Endothelial cell of umbilical vein (primary cell): ENCODE measurements at regions of chr9 and their contacts with region 1.

Region 1: DNA sequence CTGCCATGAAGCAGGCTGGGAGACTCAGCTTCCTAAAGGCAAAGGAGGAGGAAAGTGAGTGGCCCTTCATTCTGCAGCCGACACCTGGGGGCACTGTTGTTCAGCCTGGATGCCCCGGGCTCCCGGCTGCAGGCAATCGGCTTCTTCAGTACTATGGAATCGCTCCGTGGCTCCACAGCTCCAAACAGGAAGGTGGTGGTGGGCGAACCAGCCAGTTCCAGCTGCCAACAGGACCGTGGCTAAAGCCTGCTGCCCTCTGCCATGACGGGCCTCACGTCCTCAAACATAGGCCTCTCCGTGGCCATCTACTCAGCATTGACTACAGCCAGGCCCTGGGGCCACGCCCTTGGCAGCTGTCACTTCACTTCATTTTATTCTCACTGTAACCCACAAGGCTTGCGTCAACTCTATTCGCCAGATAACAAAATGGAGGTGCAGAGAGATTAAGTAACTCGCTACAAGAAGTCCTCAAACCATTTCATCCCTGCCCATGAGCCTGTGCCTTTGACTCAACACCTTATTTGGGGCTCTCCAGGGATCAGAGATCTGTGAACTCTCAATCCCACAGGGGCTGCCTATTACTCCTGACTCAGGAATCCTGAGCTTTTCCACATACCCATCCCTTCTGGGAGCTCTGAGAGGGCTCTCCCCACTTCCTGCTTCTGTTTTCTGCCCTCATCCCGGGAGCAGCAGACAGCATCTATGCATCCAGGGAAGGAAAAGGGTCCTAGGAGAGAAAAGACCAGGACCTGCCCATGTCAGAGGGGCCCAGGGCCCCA is 38.0 kb downstream of the PAX5 start:
- DNase-seq: peak; percentile 68
- H3K4me3 ChIP-seq: no peak overlapping the region
- H3K27ac ChIP-seq: no peak overlapping the region
- H3K4me1 ChIP-seq: no peaks in the 10 kb centered on the region
- H3K27me3 ChIP-seq: peaks cover 10 to 18% of the 10 kb centered on the region in 2 experiments
- CTCF ChIP-seq: peak; percentile 68 to 90
- POLR2A ChIP-seq: no peak

Region 2: GRCh38 chr9:36862206-36863145 is 133.6 kb before region 1 on chr9:
- CTCF ChIA-PET with region 1: no interaction called
- POLR2A ChIA-PET with region 1: no interaction called
- dilution Hi-C with region 1: no loop called
- intact Hi-C with region 1: loop called (anchors 1 kb)
- DNase-seq: peak; percentile 40
- H3K4me3 ChIP-seq: no peak overlapping the region
- H3K27ac ChIP-seq: no peak overlapping the region
- H3K4me1 ChIP-seq: no peaks in the 10 kb centered on the region
- H3K27me3 ChIP-seq: peaks cover 26 to 35% of the 10 kb centered on the region in 2 experiments
- CTCF ChIP-seq: peak; percentile 65 to 84
- POLR2A ChIP-seq: no peak

Region 3: GRCh38 chr9:37010180-37010579 is 14.1 kb after region 1 on chr9:
- CTCF ChIA-PET with region 1: interaction called, 14 read pairs
- POLR2A ChIA-PET with region 1: no interaction called
- dilution Hi-C with region 1: no loop called
- intact Hi-C with region 1: no loop called
- DNase-seq: no peak
- H3K4me3 ChIP-seq: no peak overlapping the region
- H3K27ac ChIP-seq: no peak overlapping the region
- H3K4me1 ChIP-seq: no peaks in the 10 kb centered on the region
- H3K27me3 ChIP-seq: peaks cover 25 to 30% of the 10 kb centered on the region in 2 experiments
- CTCF ChIP-seq: no peak
- POLR2A ChIP-seq: no peak

Region 4: GRCh38 chr9:37102486-37102885 is 106.4 kb after region 1 on chr9:
- CTCF ChIA-PET with region 1: no interaction called
- POLR2A ChIA-PET with region 1: no interaction called
- dilution Hi-C with region 1: no loop called
- intact Hi-C with region 1: no loop called
- DNase-seq: no peak
- H3K4me3 ChIP-seq: no peak overlapping the region
- H3K27ac ChIP-seq: no peak overlapping the region
- H3K4me1 ChIP-seq: no peaks in the 10 kb centered on the region
- H3K27me3 ChIP-seq: peaks cover 2 to 8% of the 10 kb centered on the region in 2 experiments
- CTCF ChIP-seq: no peak
- POLR2A ChIP-seq: no peak

Region 5: DNA sequence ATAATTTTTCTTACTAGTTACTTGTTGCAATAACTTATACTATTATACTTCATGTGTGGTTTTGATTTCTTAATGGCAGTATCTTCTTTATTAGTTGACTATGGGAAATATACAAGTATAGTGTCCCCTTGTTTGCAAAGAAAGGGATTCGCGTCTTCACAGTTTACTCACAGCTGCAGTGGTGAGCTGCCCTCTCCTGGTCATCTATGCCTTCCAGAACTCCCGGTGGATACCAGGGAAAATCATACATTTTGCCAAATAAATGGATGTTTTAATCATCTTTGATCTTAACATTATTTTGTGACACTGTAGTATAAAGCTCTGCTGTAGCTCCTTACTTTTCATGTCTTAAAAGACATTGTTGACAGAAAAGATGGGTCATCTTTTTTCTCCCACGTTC is 266.3 kb after region 1 on chr9:
- CTCF ChIA-PET with region 1: interaction called, 44 read pairs
- POLR2A ChIA-PET with region 1: no interaction called
- dilution Hi-C with region 1: no loop called
- intact Hi-C with region 1: loop called (anchors 1 kb)
- DNase-seq: peak; percentile 60
- H3K4me3 ChIP-seq: no peak overlapping the region
- H3K27ac ChIP-seq: no peak overlapping the region
- H3K4me1 ChIP-seq: no peaks in the 10 kb centered on the region
- H3K27me3 ChIP-seq: no peaks in the 10 kb centered on the region
- CTCF ChIP-seq: peak; percentile 54 to 55
- POLR2A ChIP-seq: no peak

Region 6: GRCh38 chr9:37364751-37365360 is 368.7 kb after region 1 on chr9:
- CTCF ChIA-PET with region 1: interaction called, 13 read pairs
- POLR2A ChIA-PET with region 1: no interaction called
- dilution Hi-C with region 1: no loop called
- intact Hi-C with region 1: loop called (anchors 2 kb)
- DNase-seq: peak; percentile 10
- H3K4me3 ChIP-seq: no peak overlapping the region
- H3K27ac ChIP-seq: no peak overlapping the region
- H3K4me1 ChIP-seq: no peaks in the 10 kb centered on the region
- H3K27me3 ChIP-seq: no peaks in the 10 kb centered on the region
- CTCF ChIP-seq: no peak
- POLR2A ChIP-seq: no peak

Region 7: DNA sequence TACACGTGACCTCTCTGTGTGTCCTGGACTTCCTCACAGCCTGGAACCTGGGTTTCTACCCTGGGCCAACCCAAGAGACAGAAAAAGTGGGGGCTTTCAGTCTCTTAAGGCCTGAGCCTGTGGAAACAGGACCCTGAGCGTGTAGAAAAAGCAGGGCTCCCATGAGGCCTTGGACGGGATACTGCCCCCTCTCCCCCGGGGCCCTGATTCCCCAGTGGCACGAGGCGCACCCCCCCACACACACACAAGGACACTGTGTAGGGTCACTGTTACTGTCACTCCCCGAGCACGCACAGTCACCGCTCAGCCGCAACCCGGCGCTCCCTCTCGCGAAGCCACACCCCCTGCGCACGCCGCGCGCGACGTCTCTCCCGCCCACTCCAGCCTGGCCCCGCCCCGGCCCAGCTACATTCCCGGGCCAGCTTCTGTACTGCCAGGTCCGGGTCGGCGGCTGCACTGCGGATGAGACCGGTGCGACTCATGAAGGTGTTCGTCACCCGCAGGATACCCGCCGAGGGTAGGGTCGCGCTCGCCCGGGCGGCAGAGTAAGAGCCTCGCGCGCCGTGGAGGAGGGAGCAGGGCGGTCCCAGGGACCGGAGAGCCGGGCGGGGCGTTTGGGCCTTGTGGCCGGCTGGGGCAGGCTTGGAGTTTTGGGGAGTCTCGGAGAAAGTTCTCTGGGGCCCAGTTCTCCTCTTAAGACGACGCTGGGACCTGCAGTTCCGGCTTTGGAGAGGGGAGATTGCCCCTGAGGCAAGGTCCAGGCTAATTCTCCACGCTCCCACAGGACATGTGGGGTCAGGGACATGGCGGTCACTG is 426.4 kb after region 1 on chr9 and contains the start of gene GRHPR:
- CTCF ChIA-PET with region 1: interaction called, 10 read pairs
- POLR2A ChIA-PET with region 1: no interaction called
- dilution Hi-C with region 1: no loop called
- intact Hi-C with region 1: no loop called
- DNase-seq: peak; percentile 84
- H3K4me3 ChIP-seq: peak within 1 kb of the TSS; percentile 68 to 89 (median 72)
- H3K27ac ChIP-seq: peak within 1 kb of the TSS; percentile 40
- H3K4me1 ChIP-seq: peaks cover 15% of the 10 kb centered on the region
- H3K27me3 ChIP-seq: no peaks in the 10 kb centered on the region
- CTCF ChIP-seq: no peak
- POLR2A ChIP-seq: peak; percentile 88
- total RNA-seq, gene GRHPR: 91.2 and 103 TPM in 2 replicates